Mammary epithelial cell (primary cell): ENCODE measurements at regions of chr22 and their contacts with region 1.

Region 1: GRCh38 chr22:38490915-38491314 is 15.2 kb downstream of the DDX17 start:
- DNase-seq: no peak
- H3K4me3 ChIP-seq: no peak overlapping the region
- H3K27ac ChIP-seq: no peak overlapping the region
- H3K4me1 ChIP-seq: no peaks in the 10 kb centered on the region
- H3K27me3 ChIP-seq: no peaks in the 10 kb centered on the region
- CTCF ChIP-seq: no peak

Region 2: GRCh38 chr22:38470209-38470608 is 20.7 kb before region 1 on chr22:
- CTCF ChIA-PET with region 1: no interaction called
- dilution Hi-C with region 1: no loop called
- in situ Hi-C with region 1: no loop called
- intact Hi-C with region 1: no loop called
- DNase-seq: no peak
- H3K4me3 ChIP-seq: no peak overlapping the region
- H3K27ac ChIP-seq: no peak overlapping the region
- H3K4me1 ChIP-seq: peaks cover 9% of the 10 kb centered on the region
- H3K27me3 ChIP-seq: no peaks in the 10 kb centered on the region
- CTCF ChIP-seq: no peak

Region 3: GRCh38 chr22:38531251-38531938 is 40.5 kb after region 1 on chr22:
- CTCF ChIA-PET with region 1: no interaction called
- dilution Hi-C with region 1: loop called (anchors 5 kb)
- in situ Hi-C with region 1: no loop called
- intact Hi-C with region 1: no loop called
- DNase-seq: no peak
- H3K4me3 ChIP-seq: no peak overlapping the region
- H3K27ac ChIP-seq: no peak overlapping the region
- H3K4me1 ChIP-seq: no peaks in the 10 kb centered on the region
- H3K27me3 ChIP-seq: no peaks in the 10 kb centered on the region
- CTCF ChIP-seq: no peak

Region 4: DNA sequence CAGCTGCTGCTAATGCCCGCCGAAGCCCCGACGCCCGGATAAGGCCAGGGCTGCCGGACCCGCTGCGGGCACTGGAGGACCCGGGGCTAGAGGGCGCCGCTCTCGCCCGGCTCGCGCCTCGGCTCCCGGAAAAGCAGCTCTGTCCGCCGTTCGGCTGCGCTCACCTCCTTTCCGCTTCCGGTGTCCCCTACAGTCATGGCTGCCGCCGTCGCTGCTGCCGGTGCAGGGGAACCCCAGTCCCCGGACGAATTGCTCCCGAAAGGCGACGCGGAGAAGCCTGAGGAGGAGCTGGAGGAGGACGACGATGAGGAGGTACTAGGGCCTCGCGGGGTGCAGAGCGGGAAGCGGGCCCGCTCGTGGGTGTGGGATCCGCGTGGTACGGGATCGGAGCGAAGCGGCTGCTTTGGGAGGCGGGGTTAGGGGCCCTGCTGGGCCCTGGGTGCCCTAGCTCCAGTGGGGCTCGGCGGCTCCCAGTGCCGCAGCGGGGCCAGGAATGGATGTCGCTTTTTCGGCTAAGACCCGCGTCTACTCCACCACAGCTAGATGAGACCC is 190.9 kb after region 1 on chr22 and contains the start of gene TOMM22:
- CTCF ChIA-PET with region 1: no interaction called
- dilution Hi-C with region 1: no loop called
- in situ Hi-C with region 1: no loop called
- intact Hi-C with region 1: no loop called
- DNase-seq: peak; percentile 85
- H3K4me3 ChIP-seq: peak within 1 kb of the TSS; percentile 68 to 95 (median 93)
- H3K27ac ChIP-seq: peak within 1 kb of the TSS; percentile 88
- H3K4me1 ChIP-seq: peaks cover 8% of the 10 kb centered on the region
- H3K27me3 ChIP-seq: no peaks in the 10 kb centered on the region
- CTCF ChIP-seq: peak; percentile 36 to 76
- total RNA-seq, gene TOMM22: 56.5 to 76.7 TPM